Endothelial cell of umbilical vein (primary cell): ENCODE measurements at regions of chr9 and their contacts with region 1.

Region 1: GRCh38 chr9:122159026-122159924 is at the starts of genes MORN5 and NDUFA8:
- DNase-seq: peak; percentile 97
- H3K4me3 ChIP-seq: peak within 1 kb of the TSS; percentile 56 to 100 (median 87)
- H3K27ac ChIP-seq: peak within 1 kb of the TSS; percentile 0
- H3K4me1 ChIP-seq: peaks cover 8% of the 10 kb centered on the region
- H3K27me3 ChIP-seq: peaks cover 8 to 16% of the 10 kb centered on the region in 2 experiments
- CTCF ChIP-seq: no peak
- POLR2A ChIP-seq: peak; percentile 90
- total RNA-seq, gene MORN5: not detected in 2 replicates
- total RNA-seq, gene NDUFA8: 65.5 and 68.2 TPM in 2 replicates

Region 2: GRCh38 chr9:122116040-122116439 is 43.2 kb before region 1 on chr9:
- CTCF ChIA-PET with region 1: no interaction called
- POLR2A ChIA-PET with region 1: no interaction called
- dilution Hi-C with region 1: no loop called
- intact Hi-C with region 1: no loop called
- DNase-seq: no peak
- H3K4me3 ChIP-seq: no peak overlapping the region
- H3K27ac ChIP-seq: no peak overlapping the region
- H3K4me1 ChIP-seq: no peaks in the 10 kb centered on the region
- H3K27me3 ChIP-seq: peaks cover 0 to 5% of the 10 kb centered on the region in 2 experiments
- CTCF ChIP-seq: no peak
- POLR2A ChIP-seq: no peak

Region 3: GRCh38 chr9:122144836-122145591 is 14.3 kb before region 1 on chr9:
- CTCF ChIA-PET with region 1: interaction called, 34 read pairs
- POLR2A ChIA-PET with region 1: interaction called, 3 read pairs
- dilution Hi-C with region 1: no loop called
- intact Hi-C with region 1: no loop called
- DNase-seq: peak; percentile 60
- H3K4me3 ChIP-seq: no peak overlapping the region
- H3K27ac ChIP-seq: no peak overlapping the region
- H3K4me1 ChIP-seq: peaks cover 45% of the 10 kb centered on the region
- H3K27me3 ChIP-seq: no peaks in the 10 kb centered on the region
- CTCF ChIP-seq: peak; percentile 53 to 62
- POLR2A ChIP-seq: no peak

Region 4: GRCh38 chr9:122228568-122229484 is 69.6 kb after region 1 on chr9 and contains the start of gene LHX6:
- CTCF ChIA-PET with region 1: no interaction called
- POLR2A ChIA-PET with region 1: no interaction called
- dilution Hi-C with region 1: no loop called
- intact Hi-C with region 1: loop called (anchors 5 kb)
- DNase-seq: peak; percentile 43
- H3K4me3 ChIP-seq: peak within 1 kb of the TSS; percentile 18 to 55 (median 41)
- H3K27ac ChIP-seq: no peak within 1 kb of the TSS
- H3K4me1 ChIP-seq: peaks cover 10% of the 10 kb centered on the region
- H3K27me3 ChIP-seq: peaks cover 42 to 54% of the 10 kb centered on the region in 2 experiments
- CTCF ChIP-seq: no peak
- POLR2A ChIP-seq: no peak
- total RNA-seq, gene LHX6: 9.4 and 18.4 TPM in 2 replicates

Region 5: GRCh38 chr9:122254761-122255160 is 95.5 kb after region 1 on chr9:
- CTCF ChIA-PET with region 1: no interaction called
- POLR2A ChIA-PET with region 1: no interaction called
- dilution Hi-C with region 1: no loop called
- intact Hi-C with region 1: loop called (anchors 2 kb)
- DNase-seq: no peak
- H3K4me3 ChIP-seq: peak overlapping the region in 1 of 3 experiments; percentile 33
- H3K27ac ChIP-seq: peak overlapping the region; percentile 88
- H3K4me1 ChIP-seq: peaks cover 37% of the 10 kb centered on the region
- H3K27me3 ChIP-seq: no peaks in the 10 kb centered on the region
- CTCF ChIP-seq: no peak
- POLR2A ChIP-seq: no peak

Region 6: DNA sequence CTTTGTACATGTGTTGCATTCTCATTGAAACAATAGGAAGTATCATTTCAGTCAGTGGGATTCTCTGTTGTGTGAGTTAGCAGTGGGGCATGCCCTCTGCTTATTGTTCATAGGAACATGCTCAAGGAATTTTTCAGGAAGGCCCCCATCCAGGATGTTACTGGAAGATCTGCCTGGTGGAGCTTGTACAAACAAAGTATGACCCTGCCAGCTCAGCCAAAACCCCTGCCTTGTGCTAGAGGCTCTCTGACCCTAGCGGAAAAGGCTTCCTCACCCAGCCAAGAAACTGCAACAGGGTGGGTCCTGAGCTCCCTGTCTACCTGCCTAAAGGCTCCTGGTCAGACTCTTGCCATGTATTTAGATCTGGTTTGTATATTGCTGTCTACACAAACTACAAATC is 148.7 kb after region 1 on chr9:
- CTCF ChIA-PET with region 1: no interaction called
- POLR2A ChIA-PET with region 1: no interaction called
- dilution Hi-C with region 1: no loop called
- intact Hi-C with region 1: loop called (anchors 2 kb)
- DNase-seq: peak; percentile 92
- H3K4me3 ChIP-seq: no peak overlapping the region
- H3K27ac ChIP-seq: peak overlapping the region; percentile 84
- H3K4me1 ChIP-seq: peaks cover 53% of the 10 kb centered on the region
- H3K27me3 ChIP-seq: no peaks in the 10 kb centered on the region
- CTCF ChIP-seq: no peak
- POLR2A ChIP-seq: no peak